B cell (primary cell): ENCODE measurements at regions of chr14 and their contacts with region 1.

Region 1: DNA sequence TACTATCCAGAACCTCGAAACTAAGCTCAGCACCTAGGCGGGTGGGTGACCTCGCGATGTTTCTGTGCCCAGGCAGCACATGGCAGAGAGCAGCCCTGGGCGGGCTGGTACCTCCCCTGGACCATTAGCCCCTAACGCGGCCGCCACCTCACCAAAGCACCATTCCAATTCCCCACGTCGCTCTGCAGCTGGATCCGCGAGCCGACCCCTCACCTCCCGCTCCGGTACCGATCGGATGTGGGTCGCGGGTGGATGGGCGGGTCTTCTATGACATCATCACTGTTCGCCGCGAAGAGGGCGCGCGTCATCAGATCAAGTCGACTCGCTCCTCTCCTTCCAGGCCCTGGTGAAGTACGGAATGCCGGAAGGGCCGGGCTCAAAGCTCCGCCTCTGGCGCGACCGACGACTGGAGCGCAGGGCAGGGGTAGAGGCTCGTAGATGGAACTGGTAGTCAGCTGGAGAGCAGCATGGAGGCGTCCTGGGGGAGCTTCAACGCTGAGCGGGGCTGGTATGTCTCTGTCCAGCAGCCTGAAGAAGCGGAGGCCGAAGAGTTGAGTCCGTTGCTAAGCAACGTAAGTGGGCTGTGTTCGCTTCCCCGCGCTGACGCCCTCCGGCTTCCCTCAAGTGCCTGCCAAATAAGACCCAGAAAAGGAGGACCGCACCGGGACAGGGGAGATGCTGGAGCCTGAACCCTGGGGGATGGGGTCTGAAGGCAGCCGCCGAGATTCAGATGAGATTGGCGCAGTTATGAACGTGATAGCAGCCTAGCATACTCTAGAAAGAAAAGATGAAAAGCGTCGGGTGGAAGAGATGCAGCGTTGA is at the starts of genes SLC38A6 and TRMT5:
- DNase-seq: peak; percentile 95
- ATAC-seq: peak; percentile 84
- H3K4me3 ChIP-seq: peak within 1 kb of the TSS; percentile 86 to 97 (median 90)
- H3K4me3 Mint-ChIP-seq: no peak within 1 kb of the TSS
- H3K27ac ChIP-seq: peak within 1 kb of the TSS; percentile 69 to 77
- H3K27ac Mint-ChIP-seq: no peak within 1 kb of the TSS
- H3K4me1 ChIP-seq: peaks cover 15 to 18% of the 10 kb centered on the region in 2 donors
- H3K4me1 Mint-ChIP-seq: peaks cover 16% of the 10 kb centered on the region
- H3K27me3 ChIP-seq: no peaks in the 10 kb centered on the region
- H3K27me3 Mint-ChIP-seq: no peaks in the 10 kb centered on the region
- CTCF ChIP-seq: no peak
- total RNA-seq, gene SLC38A6: 14.5 and 15.9 TPM in 2 replicates
- total RNA-seq, gene TRMT5: 6.1 and 8.7 TPM in 2 replicates

Region 2: GRCh38 chr14:60656686-60657455 is 324.2 kb before region 1 on chr14:
- CTCF ChIA-PET with region 1: no interaction called
- POLR2A ChIA-PET with region 1: no interaction called
- intact Hi-C with region 1: loop called (anchors 5 kb)
- DNase-seq: peak; percentile 82
- ATAC-seq: peak; percentile 87
- H3K4me3 ChIP-seq: peak overlapping the region; percentile 50 to 71 (median 64)
- H3K4me3 Mint-ChIP-seq: peak overlapping the region; percentile 84
- H3K27ac ChIP-seq: no peak overlapping the region
- H3K27ac Mint-ChIP-seq: peak overlapping the region; percentile 80
- H3K4me1 ChIP-seq: peaks cover 37 to 39% of the 10 kb centered on the region in 2 donors
- H3K4me1 Mint-ChIP-seq: peaks cover 36% of the 10 kb centered on the region
- H3K27me3 ChIP-seq: peaks cover 3 to 85% (median 70%) of the 10 kb centered on the region in 4 experiments
- H3K27me3 Mint-ChIP-seq: peaks cover 73% of the 10 kb centered on the region
- CTCF ChIP-seq: peak; percentile 30

Region 3: GRCh38 chr14:60845523-60845922 is 135.5 kb before region 1 on chr14:
- CTCF ChIA-PET with region 1: no interaction called
- POLR2A ChIA-PET with region 1: no interaction called
- intact Hi-C with region 1: loop called (anchors 1 kb)
- DNase-seq: peak; percentile 68
- ATAC-seq: peak; percentile 75
- H3K4me3 ChIP-seq: peak overlapping the region in 1 of 5 experiments; percentile 48
- H3K4me3 Mint-ChIP-seq: peak overlapping the region; percentile 10
- H3K27ac ChIP-seq: peak overlapping the region; percentile 69 to 80
- H3K27ac Mint-ChIP-seq: peak overlapping the region; percentile 77
- H3K4me1 ChIP-seq: peaks cover 8 to 16% of the 10 kb centered on the region in 2 donors
- H3K4me1 Mint-ChIP-seq: peaks cover 15% of the 10 kb centered on the region
- H3K27me3 ChIP-seq: no peaks in the 10 kb centered on the region
- H3K27me3 Mint-ChIP-seq: no peaks in the 10 kb centered on the region
- CTCF ChIP-seq: no peak

Region 4: DNA sequence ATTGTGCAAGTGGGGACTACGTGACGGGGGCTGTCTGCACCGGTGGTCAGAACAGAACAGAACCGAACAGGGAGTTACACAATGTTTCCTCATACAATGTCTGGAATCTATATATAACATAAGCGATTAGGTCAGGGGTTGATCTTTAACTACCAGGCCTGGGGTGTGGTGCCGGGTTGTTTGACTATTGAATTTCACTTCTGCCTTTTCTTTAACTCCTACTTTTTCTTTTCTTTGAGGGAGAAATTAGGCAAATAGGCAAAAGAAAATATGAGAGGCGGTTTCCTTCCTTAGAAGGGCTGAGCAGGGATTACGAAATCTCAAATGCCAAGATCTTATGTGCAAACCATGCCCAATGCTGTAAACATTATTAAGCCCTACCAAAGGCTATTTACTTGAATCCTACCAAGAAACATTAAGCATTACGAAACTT is 140.3 kb after region 1 on chr14:
- CTCF ChIA-PET with region 1: no interaction called
- POLR2A ChIA-PET with region 1: no interaction called
- intact Hi-C with region 1: no loop called
- DNase-seq: no peak
- ATAC-seq: no peak
- H3K4me3 ChIP-seq: no peak overlapping the region
- H3K4me3 Mint-ChIP-seq: peak overlapping the region; percentile 13
- H3K27ac ChIP-seq: no peak overlapping the region
- H3K27ac Mint-ChIP-seq: peak overlapping the region; percentile 74
- H3K4me1 ChIP-seq: peaks cover 0 to 11% of the 10 kb centered on the region in 2 donors
- H3K4me1 Mint-ChIP-seq: peaks cover 13% of the 10 kb centered on the region
- H3K27me3 ChIP-seq: peaks cover 0 to 5% (median 0%) of the 10 kb centered on the region in 4 experiments
- H3K27me3 Mint-ChIP-seq: peaks cover 4% of the 10 kb centered on the region
- CTCF ChIP-seq: no peak